Activated T-helper 1 cell treated with anti-CD3 and anti-CD28 coated beads, Interleukin-12 subunit alpha, Interleukin-12 subunit beta, Interleukin-2, Interleukin-4 antibody, amounts not matched to agents 30 ng/mL and 10 ng/mL and 1 ng/mL, durations not matched to agents 14 hours and 24 hours and 36 hours (primary cell): ENCODE measurements at regions of chr3 and their contacts with region 1.

Region 1: GRCh38 chr3:46284981-46285683 is 42.9 kb downstream of the CCR3 start:
- DNase-seq: peak; percentile 54
- H3K4me3 Mint-ChIP-seq: peak overlapping the region; percentile 59
- H3K27ac Mint-ChIP-seq: peak overlapping the region; percentile 85
- H3K4me1 Mint-ChIP-seq: peaks cover 82% of the 10 kb centered on the region
- H3K27me3 Mint-ChIP-seq: no peaks in the 10 kb centered on the region

Region 2: GRCh38 chr3:45890405-45890804 is 394.7 kb before region 1 on chr3:
- intact Hi-C with region 1: no loop called
- DNase-seq: no peak
- H3K4me3 Mint-ChIP-seq: no peak overlapping the region
- H3K27ac Mint-ChIP-seq: no peak overlapping the region
- H3K4me1 Mint-ChIP-seq: peaks cover 14% of the 10 kb centered on the region
- H3K27me3 Mint-ChIP-seq: peaks cover 44% of the 10 kb centered on the region

Region 3: DNA sequence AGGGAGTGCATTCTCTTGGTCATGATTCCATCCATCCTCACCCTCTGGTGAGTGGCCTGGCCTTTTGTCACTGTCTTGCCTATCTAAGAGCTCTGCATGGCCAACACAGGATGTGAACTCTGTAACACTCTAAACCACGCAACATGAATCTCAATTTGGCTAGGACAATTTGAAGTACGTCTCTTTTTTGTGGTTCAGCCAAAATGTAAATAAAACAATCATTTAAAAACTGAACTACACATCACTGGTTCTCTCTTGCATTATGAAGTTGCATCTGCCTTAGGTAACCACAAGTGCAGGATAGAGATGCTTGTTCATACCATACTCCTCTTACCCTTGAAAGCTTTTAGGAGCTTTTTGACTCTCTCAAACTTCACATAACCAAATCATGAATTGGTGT is 15.6 kb before region 1 on chr3:
- intact Hi-C with region 1: loop called (anchors 1 kb)
- DNase-seq: peak; percentile 16
- H3K4me3 Mint-ChIP-seq: peak overlapping the region; percentile 12
- H3K27ac Mint-ChIP-seq: peak overlapping the region; percentile 63
- H3K4me1 Mint-ChIP-seq: peaks cover 70% of the 10 kb centered on the region
- H3K27me3 Mint-ChIP-seq: peaks cover 16% of the 10 kb centered on the region

Region 4: GRCh38 chr3:46395210-46395731 is 110.1 kb after region 1 on chr3:
- intact Hi-C with region 1: no loop called
- DNase-seq: no peak
- H3K4me3 Mint-ChIP-seq: no peak overlapping the region
- H3K27ac Mint-ChIP-seq: no peak overlapping the region
- H3K4me1 Mint-ChIP-seq: peaks cover 9% of the 10 kb centered on the region
- H3K27me3 Mint-ChIP-seq: peaks cover 9% of the 10 kb centered on the region